Activated B cell treated with CpG ODN at 0.5 μM for 24 hours (primary cell): ENCODE measurements at regions of chr2 and their contacts with region 1.

Region 1: GRCh38 chr2:226791487-226792081 is 8.0 kb downstream of the IRS1 start:
- DNase-seq: peak; percentile 93
- ATAC-seq: peak; percentile 98
- H3K4me3 Mint-ChIP-seq: peak overlapping the region; percentile 93
- H3K27ac Mint-ChIP-seq: peak overlapping the region; percentile 99
- H3K4me1 Mint-ChIP-seq: peaks cover 34% of the 10 kb centered on the region
- H3K27me3 Mint-ChIP-seq: no peaks in the 10 kb centered on the region
- CTCF ChIP-seq: no peak

Region 2: GRCh38 chr2:224952936-224953657 is 1838.5 kb before region 1 on chr2:
- CTCF ChIA-PET with region 1: no interaction called
- POLR2A ChIA-PET with region 1: no interaction called
- intact Hi-C with region 1: loop called (anchors 5 kb)
- DNase-seq: no peak
- ATAC-seq: peak; percentile 83
- H3K4me3 Mint-ChIP-seq: peak overlapping the region; percentile 42
- H3K27ac Mint-ChIP-seq: peak overlapping the region; percentile 79
- H3K4me1 Mint-ChIP-seq: peaks cover 92% of the 10 kb centered on the region
- H3K27me3 Mint-ChIP-seq: no peaks in the 10 kb centered on the region
- CTCF ChIP-seq: no peak

Region 3: DNA sequence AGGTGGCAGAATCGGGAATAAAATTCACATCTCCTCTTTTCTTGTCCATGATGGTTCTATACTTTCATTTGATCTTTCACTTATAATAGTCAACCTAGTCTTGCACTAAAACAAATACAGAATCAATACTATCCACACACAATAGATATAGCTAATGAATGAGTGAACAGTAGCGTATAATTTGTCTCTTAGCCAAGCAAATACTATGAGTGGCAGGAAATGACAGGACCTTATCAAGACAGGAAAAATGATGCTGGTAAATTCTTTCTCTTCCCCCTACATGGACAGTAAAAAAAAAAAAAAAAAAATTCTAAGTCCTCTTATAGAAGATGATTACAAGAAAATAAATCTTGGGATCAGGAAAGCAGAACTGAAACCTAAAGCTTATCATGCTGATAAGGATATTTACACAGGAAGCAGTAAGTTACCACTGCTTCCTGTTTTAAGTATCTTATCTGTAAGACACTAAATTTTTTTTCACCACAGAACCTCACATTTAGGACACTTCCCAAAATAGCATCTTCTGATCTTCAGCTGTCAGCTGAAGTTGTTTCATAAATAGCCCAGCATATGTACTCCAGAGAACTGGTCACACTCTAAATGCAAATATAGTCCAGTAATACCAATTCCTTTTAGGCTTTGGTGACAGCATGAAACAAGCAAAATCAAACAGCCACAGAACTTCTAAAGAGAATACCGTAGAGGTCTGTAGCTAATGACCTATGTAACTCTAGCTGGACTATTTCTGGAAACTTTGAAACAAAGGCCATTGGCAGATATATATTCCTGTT is 19.0 kb before region 1 on chr2:
- CTCF ChIA-PET with region 1: interaction called, 5 read pairs
- POLR2A ChIA-PET with region 1: interaction called, 19 read pairs
- intact Hi-C with region 1: loop called (anchors 1 kb)
- DNase-seq: no peak
- ATAC-seq: peak; percentile 83
- H3K4me3 Mint-ChIP-seq: peak overlapping the region; percentile 35
- H3K27ac Mint-ChIP-seq: peak overlapping the region; percentile 71
- H3K4me1 Mint-ChIP-seq: peaks cover 49% of the 10 kb centered on the region
- H3K27me3 Mint-ChIP-seq: no peaks in the 10 kb centered on the region
- CTCF ChIP-seq: no peak

Region 4: DNA sequence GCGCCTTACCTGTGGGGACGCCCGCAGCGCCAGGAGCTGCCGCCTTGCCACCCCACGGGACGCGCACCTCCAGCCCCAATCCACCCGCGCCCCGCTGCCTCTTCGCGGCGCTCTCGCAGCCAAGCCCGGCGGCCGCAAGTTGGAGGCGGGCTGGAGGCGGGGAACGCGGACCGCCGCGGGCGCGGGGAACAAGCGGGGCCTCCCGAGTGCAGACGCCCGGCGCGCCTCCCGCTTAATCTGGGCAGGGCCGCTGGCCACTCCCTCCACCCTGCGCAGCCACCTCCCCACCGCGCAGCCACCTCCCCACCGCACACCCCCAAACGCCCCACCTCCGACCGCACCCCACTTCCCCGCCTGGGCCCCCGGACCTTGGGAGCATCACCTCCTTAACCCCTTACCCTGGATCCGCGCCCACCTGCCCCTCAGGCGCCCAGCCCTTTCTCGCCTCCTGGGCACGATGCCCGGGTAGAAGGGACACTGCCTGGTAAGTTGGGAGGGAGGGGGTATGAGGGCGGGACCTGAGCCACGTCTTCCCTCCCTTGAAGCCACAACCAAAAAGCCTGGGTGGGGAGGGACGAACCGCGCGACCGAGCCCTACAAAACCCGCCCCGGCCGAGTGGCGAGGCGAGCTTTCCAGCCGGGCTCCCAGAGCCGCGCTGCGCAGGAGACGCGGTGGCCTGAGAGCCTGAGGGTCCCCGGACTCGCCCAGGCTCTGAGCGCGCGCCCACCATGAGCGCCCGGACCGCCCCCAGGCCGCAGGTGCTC is 372.6 kb after region 1 on chr2 and contains the starts of genes COL4A3 and COL4A4:
- CTCF ChIA-PET with region 1: no interaction called
- POLR2A ChIA-PET with region 1: no interaction called
- intact Hi-C with region 1: loop called (anchors 2 kb)
- DNase-seq: peak; percentile 54
- ATAC-seq: peak; percentile 78
- H3K4me3 Mint-ChIP-seq: peak within 1 kb of the TSS; percentile 87
- H3K27ac Mint-ChIP-seq: peak within 1 kb of the TSS; percentile 89
- H3K4me1 Mint-ChIP-seq: peaks cover 44% of the 10 kb centered on the region
- H3K27me3 Mint-ChIP-seq: peaks cover 5% of the 10 kb centered on the region
- CTCF ChIP-seq: no peak
- total RNA-seq, gene COL4A3: 15.5 and 18.3 TPM in 2 replicates
- total RNA-seq, gene COL4A4: 9.3 and 10.9 TPM in 2 replicates